ENCODE measurements at regions of chr9 and their contacts with region 1.

Region 1: DNA sequence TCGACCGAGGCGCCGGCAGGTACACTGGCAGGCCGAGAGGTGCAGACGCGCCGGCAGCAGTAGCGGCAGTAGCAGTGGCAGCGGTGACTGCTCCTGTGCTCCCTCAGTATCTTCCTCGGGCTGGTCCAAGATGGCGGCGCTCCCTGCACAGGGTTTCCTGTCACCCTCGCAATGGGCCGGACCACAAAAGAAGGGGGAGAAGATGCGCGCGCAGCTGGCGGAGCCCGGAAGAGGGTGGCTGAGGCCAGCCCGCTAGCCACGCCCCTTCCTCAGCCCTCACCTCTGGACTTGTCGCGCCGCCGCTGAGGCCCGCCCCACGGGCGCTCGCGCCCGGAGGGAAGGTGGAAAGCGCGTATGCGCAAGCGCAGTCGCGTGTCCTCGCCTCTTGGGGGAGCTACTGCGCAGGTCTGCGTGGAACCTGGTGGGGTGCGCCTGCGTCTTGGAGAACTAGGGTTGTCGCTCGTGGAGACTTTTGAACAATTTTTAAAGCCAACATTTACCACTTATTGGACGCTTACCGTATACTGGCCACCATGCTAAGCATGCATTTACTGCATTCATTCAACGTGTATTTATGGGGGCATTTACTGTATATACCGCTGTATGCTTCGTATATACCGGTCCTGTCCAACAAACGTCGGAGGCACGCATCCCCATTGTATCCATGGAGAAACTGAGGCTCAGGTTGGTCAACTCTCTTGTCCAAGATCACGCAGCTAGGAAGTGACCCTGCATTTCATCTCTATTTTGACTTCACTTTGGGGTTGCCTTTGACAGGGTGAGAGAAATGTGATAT is at the start of gene RAB14:
- DNase-seq: peak; percentile 100
- H3K4me3 Mint-ChIP-seq: peak within 1 kb of the TSS; percentile 91
- H3K27ac Mint-ChIP-seq: peak within 1 kb of the TSS; percentile 95
- H3K4me1 Mint-ChIP-seq: peaks cover 42% of the 10 kb centered on the region
- H3K27me3 Mint-ChIP-seq: no peaks in the 10 kb centered on the region
- total RNA-seq, gene RAB14: 61.1 to 64.2 TPM

Region 2: DNA sequence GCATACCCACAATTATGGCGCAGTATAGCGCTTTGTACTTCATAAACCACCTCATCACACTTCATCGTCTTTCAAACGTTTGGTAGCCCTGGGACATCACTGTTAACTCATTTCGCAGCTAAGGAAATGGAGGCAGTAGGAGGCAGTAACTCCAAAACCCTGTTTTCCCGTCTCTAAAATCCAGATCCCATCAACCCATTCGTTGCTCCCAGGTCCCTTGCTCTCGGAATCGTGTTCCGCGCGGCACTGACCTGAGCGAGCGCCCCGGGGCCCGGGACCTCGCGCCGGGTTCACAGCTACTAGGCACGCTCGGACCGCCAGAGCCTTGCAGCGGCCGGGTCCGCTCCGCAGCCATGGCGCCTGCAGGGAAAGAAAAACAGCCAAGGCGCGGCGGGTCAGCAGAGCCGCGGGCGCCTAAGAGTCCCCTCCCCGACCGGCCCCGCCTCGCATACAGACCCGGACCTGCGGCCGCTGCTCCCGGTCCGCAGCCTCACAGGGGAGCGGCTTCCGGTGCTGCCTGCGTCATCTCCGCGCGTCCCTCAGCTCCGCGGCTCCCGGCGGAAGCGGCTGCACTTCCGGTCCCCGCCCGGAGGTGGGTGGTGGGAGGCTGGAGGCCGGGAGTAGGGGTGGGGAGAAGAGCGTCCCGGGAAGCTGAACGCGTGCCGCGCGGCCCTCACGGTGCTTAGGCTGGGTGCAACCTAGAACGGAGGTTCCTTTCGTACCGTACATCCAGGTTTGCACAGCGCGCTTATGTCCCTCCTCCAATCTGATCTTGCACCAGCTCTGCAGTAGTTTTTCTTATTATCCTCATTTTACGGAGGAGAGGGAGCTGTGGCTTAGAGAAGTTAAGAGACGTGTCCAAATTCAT is 408.8 kb before region 1 on chr9 and contains the start of gene FBXW2:
- CTCF ChIA-PET with region 1: no interaction called
- intact Hi-C with region 1: loop called (anchors 1 kb)
- DNase-seq: peak; percentile 92
- H3K4me3 Mint-ChIP-seq: peak within 1 kb of the TSS; percentile 88
- H3K27ac Mint-ChIP-seq: peak within 1 kb of the TSS; percentile 92
- H3K4me1 Mint-ChIP-seq: peaks cover 46% of the 10 kb centered on the region
- H3K27me3 Mint-ChIP-seq: no peaks in the 10 kb centered on the region
- total RNA-seq, gene FBXW2: 60.8 to 64.4 TPM

Region 3: DNA sequence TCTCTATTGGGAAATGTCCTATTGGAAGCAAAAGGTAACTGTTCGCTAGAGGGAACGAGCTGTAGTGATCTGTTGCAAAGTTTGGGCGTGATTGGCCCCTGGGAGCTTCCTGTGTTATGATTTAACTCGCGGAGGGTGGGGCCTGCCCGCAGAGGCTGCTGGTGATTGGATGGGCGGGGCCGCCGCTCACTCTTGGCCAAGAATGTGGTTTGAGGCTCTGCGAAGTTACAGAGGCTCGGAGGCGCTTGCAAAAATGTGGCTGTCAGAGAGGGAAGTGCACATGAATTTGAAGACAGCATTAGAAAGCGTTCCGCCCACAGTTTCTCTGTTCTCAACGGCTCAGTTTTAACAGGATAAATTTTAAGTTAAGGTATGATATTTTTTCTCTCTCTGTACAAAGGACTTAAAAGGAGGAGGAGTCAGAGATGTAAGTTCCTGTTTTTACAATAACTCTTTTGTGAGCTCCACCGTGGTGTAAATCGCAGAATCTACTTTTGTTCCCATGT is 80.3 kb before region 1 on chr9:
- CTCF ChIA-PET with region 1: no interaction called
- intact Hi-C with region 1: loop called (anchors 1 kb)
- DNase-seq: peak; percentile 99
- H3K4me3 Mint-ChIP-seq: peak overlapping the region; percentile 73
- H3K27ac Mint-ChIP-seq: peak overlapping the region; percentile 91
- H3K4me1 Mint-ChIP-seq: peaks cover 44% of the 10 kb centered on the region
- H3K27me3 Mint-ChIP-seq: no peaks in the 10 kb centered on the region

Region 4: GRCh38 chr9:121185774-121186403 is 16.0 kb before region 1 on chr9:
- CTCF ChIA-PET with region 1: interaction called, 4 read pairs
- intact Hi-C with region 1: loop called (anchors 2 kb)
- DNase-seq: no peak
- H3K4me3 Mint-ChIP-seq: no peak overlapping the region
- H3K27ac Mint-ChIP-seq: peak overlapping the region; percentile 75
- H3K4me1 Mint-ChIP-seq: peaks cover 79% of the 10 kb centered on the region
- H3K27me3 Mint-ChIP-seq: no peaks in the 10 kb centered on the region

Region 5: GRCh38 chr9:121261107-121261460 is 59.1 kb after region 1 on chr9:
- CTCF ChIA-PET with region 1: no interaction called
- intact Hi-C with region 1: no loop called
- DNase-seq: no peak
- H3K4me3 Mint-ChIP-seq: no peak overlapping the region
- H3K27ac Mint-ChIP-seq: no peak overlapping the region
- H3K4me1 Mint-ChIP-seq: no peaks in the 10 kb centered on the region
- H3K27me3 Mint-ChIP-seq: no peaks in the 10 kb centered on the region

Measured in activated naive CD4-positive, alpha-beta T cell treated with anti-CD3 and anti-CD28 coated beads for 36 hours (primary cell).